ENCODE measurements at regions of chr19 and their contacts with region 1.

Region 1: DNA sequence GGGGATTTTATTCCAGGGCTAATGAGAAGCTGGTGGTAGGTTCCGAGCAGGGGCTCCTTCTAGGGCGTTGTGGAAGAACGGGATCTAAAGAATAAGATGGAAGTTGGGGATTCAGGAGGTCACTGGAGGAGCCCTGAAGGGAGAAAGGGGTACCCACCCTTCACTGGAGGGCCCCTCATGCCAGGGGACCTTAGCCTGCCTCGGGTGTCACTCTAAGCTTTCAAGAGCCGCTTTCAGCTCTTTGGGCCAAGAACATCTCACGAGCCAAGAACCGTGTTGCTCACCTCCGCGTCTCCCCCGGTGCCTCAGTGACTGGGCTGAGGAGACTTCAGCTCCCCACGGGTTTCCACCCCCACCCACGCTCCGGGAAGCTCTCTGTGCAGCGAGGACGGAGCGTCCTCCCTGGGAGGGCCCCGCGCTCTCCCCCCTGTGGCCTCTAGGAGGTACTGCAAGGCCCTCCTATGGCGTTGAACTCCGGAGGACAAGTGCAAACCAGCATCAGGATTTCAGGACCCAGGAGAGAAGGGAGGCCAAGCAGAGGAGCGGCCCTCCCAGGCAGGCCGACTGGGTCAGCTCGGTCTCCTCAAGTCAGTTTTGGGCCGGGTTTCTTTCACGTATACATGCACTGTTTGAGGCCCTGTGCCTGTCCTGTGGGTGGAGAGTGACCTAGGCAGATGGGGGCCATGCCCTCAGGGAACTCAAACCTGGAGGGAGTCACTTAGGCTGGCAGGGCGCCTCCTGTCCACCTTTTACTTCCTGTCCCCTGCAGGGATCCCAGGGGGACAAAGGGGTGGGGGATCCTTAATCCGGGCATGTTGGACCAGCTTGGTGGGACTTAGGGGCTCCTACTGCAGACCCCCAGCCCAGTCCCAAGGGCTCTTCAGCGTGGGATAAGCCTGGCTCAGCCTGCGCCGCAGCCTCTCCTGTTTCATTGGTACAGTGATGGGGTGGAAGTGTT is 5.1 kb upstream of the KRTDAP start:
- DNase-seq: peak; percentile 79
- H3K4me3 Mint-ChIP-seq: peak overlapping the region; percentile 22
- H3K27ac Mint-ChIP-seq: no peak overlapping the region
- H3K4me1 Mint-ChIP-seq: no peaks in the 10 kb centered on the region
- H3K27me3 Mint-ChIP-seq: peaks cover 38% of the 10 kb centered on the region
- CTCF ChIP-seq: peak; percentile 99

Region 2: GRCh38 chr19:34757441-34757840 is 737.9 kb before region 1 on chr19:
- CTCF ChIA-PET with region 1: no interaction called
- intact Hi-C with region 1: no loop called
- DNase-seq: no peak
- H3K4me3 Mint-ChIP-seq: no peak overlapping the region
- H3K27ac Mint-ChIP-seq: no peak overlapping the region
- H3K4me1 Mint-ChIP-seq: no peaks in the 10 kb centered on the region
- H3K27me3 Mint-ChIP-seq: no peaks in the 10 kb centered on the region
- CTCF ChIP-seq: no peak

Region 3: DNA sequence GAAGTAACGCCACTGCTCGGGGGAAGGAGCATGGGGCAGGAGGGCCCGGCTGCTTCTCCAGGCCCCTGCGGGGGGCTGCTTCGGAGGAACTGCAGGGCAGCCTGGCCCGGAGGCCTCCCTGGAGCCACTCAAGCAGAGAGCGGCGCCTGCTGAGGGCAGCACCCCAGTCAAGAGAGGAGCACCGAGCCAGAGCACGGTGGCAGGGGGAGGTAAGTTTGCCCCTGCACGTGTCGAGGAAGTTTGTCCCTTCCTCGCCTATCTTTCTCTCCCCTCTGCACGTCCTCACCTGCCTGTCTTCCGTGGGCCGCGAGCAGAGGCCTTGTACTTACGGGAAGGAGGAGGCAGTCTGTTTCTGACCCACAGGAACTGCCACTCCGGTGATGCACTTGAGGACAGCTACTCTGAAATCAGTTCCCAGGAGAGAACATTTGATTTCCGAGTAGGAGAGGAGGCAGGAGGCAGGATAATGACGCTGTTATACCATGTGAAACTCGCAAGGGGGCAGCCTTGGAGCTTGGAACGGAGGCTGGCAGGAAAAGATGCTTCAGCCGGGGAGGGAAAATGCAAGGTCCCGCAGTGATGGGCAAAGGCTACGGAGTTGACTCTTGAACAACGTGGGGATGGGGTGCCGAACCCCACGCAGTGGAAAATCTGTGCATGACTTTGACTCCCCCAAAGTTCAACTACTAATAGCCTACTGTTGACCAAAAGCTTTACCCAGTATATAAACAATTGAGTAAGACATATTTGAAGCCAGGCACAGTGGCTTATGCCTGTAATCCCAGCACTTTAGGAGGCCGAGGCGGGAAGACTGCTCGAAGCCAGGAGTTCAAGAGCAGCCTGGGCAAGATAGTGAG is 142.7 kb before region 1 on chr19:
- CTCF ChIA-PET with region 1: interaction called, 25 read pairs
- intact Hi-C with region 1: loop called (anchors 1 kb)
- DNase-seq: peak; percentile 80
- H3K4me3 Mint-ChIP-seq: no peak overlapping the region
- H3K27ac Mint-ChIP-seq: no peak overlapping the region
- H3K4me1 Mint-ChIP-seq: peaks cover under 1% of the 10 kb centered on the region
- H3K27me3 Mint-ChIP-seq: peaks cover 65% of the 10 kb centered on the region
- CTCF ChIP-seq: peak; percentile 86

Measured in Calu3 (cell line).